PC-3 (cell line): ENCODE measurements at regions of chr3 and their contacts with region 1.

Region 1: DNA sequence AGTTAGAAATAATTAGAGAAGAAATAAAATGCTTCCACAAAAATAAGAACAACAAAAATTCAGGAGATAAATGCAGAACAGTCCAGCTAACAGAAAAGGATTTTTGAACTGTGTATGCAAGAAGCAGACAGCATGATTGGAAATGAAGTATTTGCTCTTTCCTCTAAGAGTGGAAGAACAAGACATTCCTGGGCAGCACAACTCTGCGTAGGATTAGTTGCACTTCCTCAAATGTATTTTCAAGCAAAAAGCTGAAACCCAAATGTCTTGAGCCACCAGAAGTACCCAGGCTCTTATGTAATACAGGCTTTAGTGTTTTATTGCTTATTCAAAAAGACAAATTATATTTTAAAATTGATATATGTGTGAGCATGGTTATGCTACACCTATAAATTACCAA is 127.2 kb downstream of the ZBTB20 start:
- DNase-seq: no peak
- ATAC-seq: no peak
- H3K4me3 ChIP-seq: no peak overlapping the region
- H3K27ac ChIP-seq: no peak overlapping the region
- H3K4me1 ChIP-seq: no peaks in the 10 kb centered on the region
- H3K27me3 ChIP-seq: no peaks in the 10 kb centered on the region
- CTCF ChIP-seq: no peak

Region 2: DNA sequence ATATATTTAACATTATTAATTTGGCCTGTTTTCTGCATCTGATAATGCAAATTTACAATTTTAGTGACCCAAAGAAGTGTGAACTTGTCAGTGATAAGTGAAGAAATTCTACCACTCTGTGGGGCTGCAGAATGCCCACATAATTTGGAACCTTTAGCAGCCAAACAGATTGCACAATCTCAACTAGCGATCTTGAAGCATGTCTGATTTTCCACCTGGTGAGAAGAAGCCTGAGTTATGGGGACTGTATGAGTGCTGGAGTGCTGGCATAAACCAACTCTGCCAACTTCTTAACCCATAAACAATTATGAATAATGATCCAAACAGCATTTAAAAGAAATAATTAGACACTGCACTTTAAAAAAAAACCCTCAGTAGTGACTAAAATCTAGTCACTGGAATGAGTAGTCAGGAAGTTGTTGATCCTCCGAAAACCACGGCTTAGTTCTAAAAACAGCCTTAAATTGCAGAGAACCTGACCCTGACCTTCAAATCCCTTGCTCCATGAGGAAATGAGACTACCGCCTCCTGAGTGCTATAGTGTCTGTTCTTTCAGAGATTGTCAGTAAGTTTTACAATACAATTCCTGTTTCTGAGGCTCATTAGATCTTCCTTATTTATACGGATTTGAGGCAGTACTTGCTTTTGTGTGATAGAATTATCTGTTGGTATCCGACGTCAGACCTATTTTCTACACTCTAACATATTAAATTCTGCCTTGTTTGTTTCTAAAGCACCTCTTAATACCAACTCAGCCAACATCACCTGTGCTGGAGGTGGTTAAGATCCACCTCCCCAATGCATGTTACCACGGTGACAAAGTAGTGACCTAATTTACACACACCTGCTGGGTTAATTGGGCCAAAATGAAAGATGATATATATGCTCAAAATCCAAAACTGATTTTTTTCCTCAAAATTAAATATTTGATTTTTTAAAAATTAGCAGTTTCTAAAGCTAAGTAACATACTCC is 140.6 kb before region 1 on chr3:
- CTCF ChIA-PET with region 1: no interaction called
- POLR2A ChIA-PET with region 1: no interaction called
- intact Hi-C with region 1: loop called (anchors 5 kb)
- DNase-seq: peak; percentile 43
- ATAC-seq: peak; percentile 83
- H3K4me3 ChIP-seq: no peak overlapping the region
- H3K27ac ChIP-seq: peak overlapping the region; percentile 29
- H3K4me1 ChIP-seq: peaks cover 17% of the 10 kb centered on the region
- H3K27me3 ChIP-seq: no peaks in the 10 kb centered on the region
- CTCF ChIP-seq: no peak